ENCODE measurements at regions of chr16 and their contacts with region 1.

Region 1: DNA sequence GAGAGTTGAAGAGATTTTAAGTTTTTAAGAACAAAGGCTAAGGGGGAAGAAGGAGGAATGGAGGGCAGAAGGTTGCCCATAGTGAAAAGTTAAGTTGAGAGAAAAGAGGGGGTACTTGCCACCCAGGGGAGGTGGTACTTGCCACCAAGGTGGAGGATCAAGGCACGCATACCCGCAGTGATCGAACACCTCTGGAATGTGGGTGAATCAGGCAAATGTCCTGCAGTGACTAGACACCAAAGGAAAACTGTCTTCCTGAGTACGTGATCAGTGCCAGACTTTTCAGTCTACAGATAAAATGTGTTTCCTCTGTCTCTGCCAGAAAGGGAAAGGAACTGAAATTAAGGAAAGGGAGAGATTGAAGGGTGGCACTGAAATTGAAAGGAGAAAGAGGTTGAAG is 2285.3 kb downstream of the TP53TG3F start:
- DNase-seq: no peak
- ATAC-seq: no peak
- H3K4me3 ChIP-seq: no peak overlapping the region
- H3K27ac ChIP-seq: no peak overlapping the region
- H3K4me1 ChIP-seq: no peaks in the 10 kb centered on the region
- H3K27me3 ChIP-seq: no peaks in the 10 kb centered on the region
- CTCF ChIP-seq: no peak

Region 2: GRCh38 chr16:35795361-35796029 is 50.8 kb after region 1 on chr16:
- intact Hi-C with region 1: loop called in 1 of 3 experiments (anchors 10 kb)
- DNase-seq: peak in 1 of 6 donors; percentile 24
- ATAC-seq: no peak
- H3K4me3 ChIP-seq: no peak overlapping the region
- H3K27ac ChIP-seq: no peak overlapping the region
- H3K4me1 ChIP-seq: no peaks in the 10 kb centered on the region
- H3K27me3 ChIP-seq: no peaks in the 10 kb centered on the region
- CTCF ChIP-seq: no peak

Measured in pancreas (tissue), 10 donors.